ENCODE measurements at regions of chr7 and their contacts with region 1.

Region 1: GRCh38 chr7:992709-993607 is 10.0 kb downstream of the CYP2W1 start:
- DNase-seq: peak; percentile 95 to 98 (median 97)
- ATAC-seq: peak; percentile 95
- H3K4me3 ChIP-seq: no peak overlapping the region
- H3K4me1 ChIP-seq: peaks cover 9% of the 10 kb centered on the region
- CTCF ChIP-seq: peak; percentile 99

Region 2: DNA sequence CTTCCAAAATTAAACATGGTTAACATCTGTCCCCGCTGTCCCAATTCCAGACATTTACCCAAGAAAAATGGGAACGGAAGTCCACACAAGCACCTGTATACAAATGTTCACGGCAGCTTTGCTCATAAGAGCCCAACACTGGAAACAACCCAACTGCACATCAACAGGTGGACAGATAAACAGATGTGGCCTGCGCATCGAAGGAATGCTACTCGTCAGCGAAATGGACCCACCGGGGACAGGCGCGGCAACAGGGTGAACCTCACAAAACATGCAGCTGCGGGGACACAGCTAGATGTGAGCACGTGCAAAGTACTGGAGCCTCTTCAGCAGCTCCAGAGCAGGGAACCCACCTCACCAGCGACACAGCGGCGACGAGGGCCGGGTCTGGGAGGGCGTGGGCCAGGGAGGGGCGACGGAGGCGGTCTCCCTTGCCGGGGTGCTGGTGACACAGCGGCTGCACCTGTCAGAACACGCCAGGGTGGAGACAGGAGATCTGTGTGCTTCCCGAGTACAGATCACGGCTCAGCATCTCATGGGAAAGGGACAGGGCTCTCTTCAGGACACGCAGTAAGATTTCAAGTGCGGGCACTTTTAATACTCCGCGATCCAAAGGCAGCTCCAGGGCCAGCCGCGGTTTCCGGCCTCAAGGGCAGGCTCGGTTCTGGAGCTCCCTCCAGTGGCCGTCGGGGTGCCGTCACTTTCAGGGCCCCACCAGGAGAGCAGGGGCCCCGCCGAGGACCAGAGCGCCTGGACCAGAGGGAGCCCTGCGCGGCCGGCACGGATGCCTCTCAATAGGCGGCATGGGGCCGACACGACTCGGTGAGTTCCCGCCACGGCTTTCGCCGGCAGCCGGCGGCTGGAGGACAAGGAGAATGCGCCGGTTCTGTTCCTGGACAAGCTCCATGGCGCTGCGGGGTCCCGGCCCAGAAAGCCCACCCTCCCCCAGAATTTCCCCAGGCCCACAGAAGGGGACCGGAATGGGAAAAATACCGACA is 72.6 kb after region 1 on chr7:
- intact Hi-C with region 1: loop called (anchors 2 to 5 kb)
- DNase-seq: peak; percentile 80 to 92 (median 91)
- ATAC-seq: peak; percentile 97
- H3K4me3 ChIP-seq: no peak overlapping the region
- H3K4me1 ChIP-seq: peaks cover 9% of the 10 kb centered on the region
- CTCF ChIP-seq: peak; percentile 90

Region 3: DNA sequence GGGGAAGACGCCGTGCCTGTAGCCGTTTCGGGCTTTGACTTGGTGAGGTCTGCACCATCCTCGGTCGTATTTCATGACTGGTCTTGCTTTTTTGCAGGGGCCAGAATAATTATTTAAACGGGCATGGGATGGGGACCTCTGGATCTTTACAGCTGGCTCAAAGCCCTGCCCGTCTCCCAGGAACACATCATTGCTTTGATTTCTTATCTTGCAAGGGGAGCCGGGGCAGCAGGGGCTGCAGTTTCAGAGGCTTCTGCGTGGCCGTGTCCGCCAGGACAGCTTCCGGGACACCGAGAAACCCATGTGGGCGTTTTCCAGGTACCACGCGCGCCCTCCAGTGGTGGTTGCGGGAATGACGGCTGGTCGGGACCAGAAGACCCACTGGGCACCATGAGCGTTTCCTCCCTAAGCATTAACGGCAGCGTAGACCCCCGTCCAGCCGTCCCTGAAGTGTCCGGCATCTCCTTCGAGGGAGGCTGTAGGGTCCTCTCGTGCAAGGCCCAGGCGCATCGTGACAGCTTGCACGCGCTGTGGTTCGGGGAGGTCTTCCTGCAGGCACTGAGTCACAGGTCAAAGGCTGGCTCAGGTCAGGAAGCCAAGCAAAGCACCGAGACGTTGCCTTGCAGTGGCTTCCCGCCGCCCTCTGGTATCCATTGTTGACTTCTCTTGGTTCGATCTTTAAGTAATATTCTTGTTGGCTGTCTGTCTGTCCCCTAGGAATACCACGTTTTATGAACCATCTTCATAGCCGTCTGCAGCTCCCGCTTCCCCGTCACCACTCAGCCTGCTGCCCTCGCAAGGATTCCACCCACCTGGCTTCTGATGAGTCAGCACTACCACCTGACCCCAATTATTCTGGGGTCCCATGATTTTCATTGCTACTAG is 183.3 kb after region 1 on chr7:
- intact Hi-C with region 1: loop called in 1 of 2 experiments (anchors 10 kb)
- DNase-seq: peak; percentile 86 to 93 (median 93)
- ATAC-seq: peak; percentile 92
- H3K4me3 ChIP-seq: no peak overlapping the region
- H3K4me1 ChIP-seq: peaks cover 6% of the 10 kb centered on the region
- CTCF ChIP-seq: peak; percentile 91

Measured in mucosa of descending colon (tissue), 3 donors.